Activated CD4-positive, alpha-beta memory T cell treated with anti-CD3 and anti-CD28 coated beads for 36 hours (primary cell): ENCODE measurements at regions of chr6 and their contacts with region 1.

Region 1: DNA sequence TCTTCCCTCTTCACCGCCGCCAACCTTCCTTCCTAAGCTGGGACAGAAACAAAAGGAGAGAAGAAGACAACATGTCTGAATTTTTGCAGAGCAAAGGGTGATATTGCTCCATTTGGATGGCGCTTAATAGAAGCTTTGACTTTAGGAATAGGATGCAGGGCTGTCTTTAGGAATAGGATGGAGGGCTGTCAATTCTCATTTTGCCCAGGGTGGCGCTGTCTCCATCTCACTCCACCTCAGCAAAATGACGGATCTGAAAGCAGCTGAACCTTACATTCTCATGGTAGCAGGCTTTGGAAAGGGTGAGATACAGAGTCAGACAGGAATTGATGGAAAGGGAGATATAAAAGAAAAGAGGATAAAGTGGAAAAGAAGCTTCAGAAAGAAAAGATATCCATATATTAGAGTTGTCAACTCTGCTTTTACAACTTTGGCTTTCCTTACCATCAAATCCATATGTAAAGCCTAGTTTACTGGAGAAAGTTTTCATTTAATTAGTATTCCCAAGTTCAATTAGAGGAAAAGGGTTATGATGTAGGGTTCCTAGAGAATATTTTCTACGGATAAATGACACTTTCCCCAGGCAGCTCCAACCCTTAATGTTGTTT is 2.4 kb downstream of the MTCL3 start:
- DNase-seq: peak; percentile 72
- H3K4me3 Mint-ChIP-seq: peak overlapping the region; percentile 85
- H3K27ac Mint-ChIP-seq: peak overlapping the region; percentile 34
- H3K4me1 Mint-ChIP-seq: peaks cover 32% of the 10 kb centered on the region
- H3K27me3 Mint-ChIP-seq: peaks cover 15% of the 10 kb centered on the region

Region 2: GRCh38 chr6:127134136-127134535 is 382.6 kb before region 1 on chr6:
- CTCF ChIA-PET with region 1: no interaction called
- POLR2A ChIA-PET with region 1: no interaction called
- intact Hi-C with region 1: no loop called
- DNase-seq: no peak
- H3K4me3 Mint-ChIP-seq: no peak overlapping the region
- H3K27ac Mint-ChIP-seq: no peak overlapping the region
- H3K4me1 Mint-ChIP-seq: no peaks in the 10 kb centered on the region
- H3K27me3 Mint-ChIP-seq: peaks cover 10% of the 10 kb centered on the region

Region 3: GRCh38 chr6:127266178-127266891 is 250.4 kb before region 1 on chr6 and contains the start of gene RNF146:
- CTCF ChIA-PET with region 1: interaction called, 22 read pairs
- POLR2A ChIA-PET with region 1: interaction called, 11 read pairs
- intact Hi-C with region 1: loop called (anchors 1 kb)
- DNase-seq: peak; percentile 77
- H3K4me3 Mint-ChIP-seq: peak within 1 kb of the TSS; percentile 93
- H3K27ac Mint-ChIP-seq: peak within 1 kb of the TSS; percentile 97
- H3K4me1 Mint-ChIP-seq: peaks cover 32% of the 10 kb centered on the region
- H3K27me3 Mint-ChIP-seq: peaks cover 1% of the 10 kb centered on the region
- total RNA-seq, gene RNF146: 15.4 to 20.3 TPM

Region 4: DNA sequence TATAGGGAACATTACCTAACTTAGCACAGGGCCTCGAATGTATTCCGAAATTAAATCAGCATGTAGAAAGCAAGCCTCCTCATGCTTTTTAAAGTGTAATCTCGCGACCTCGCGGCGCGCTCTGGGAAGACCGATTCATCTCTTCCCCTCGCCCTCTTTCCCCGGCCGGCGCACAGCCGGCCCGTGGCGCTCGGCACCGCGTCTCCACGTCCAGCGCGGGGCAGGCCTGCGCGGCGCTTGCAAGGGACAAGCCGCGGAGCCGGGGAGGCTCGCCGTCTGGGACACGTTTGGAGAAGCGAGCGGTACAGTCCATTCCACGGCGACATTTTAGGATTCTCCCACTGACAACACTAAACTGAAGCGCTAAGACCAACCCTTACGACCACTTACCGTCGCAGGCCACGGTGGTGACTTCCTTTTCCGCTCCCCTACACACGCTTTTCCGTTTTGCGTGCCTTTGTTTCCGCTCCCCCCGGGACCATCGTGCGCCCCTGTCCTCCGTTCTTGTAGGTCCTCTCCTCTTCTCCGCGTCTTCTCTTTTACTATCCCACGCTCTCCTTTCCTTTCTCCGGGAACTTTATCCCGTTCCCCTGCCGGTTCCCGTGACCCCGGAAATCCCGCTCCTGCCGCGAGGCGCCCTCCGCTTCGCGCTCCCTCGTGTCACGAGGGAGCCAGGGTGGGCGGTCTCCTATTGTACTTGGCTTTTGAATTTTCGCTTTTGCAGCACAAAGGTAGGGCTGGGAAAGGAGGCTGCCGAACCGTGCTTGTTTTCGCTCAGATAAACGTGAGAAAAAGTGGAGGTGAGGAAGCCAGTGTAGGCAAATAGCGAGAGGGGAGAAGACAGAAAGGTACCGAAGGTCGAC is 173.6 kb before region 1 on chr6 and contains the start of gene ECHDC1:
- CTCF ChIA-PET with region 1: interaction called, 22 read pairs
- POLR2A ChIA-PET with region 1: interaction called, 4 read pairs
- intact Hi-C with region 1: loop called (anchors 1 kb)
- DNase-seq: peak; percentile 83
- H3K4me3 Mint-ChIP-seq: no peak within 1 kb of the TSS
- H3K27ac Mint-ChIP-seq: no peak within 1 kb of the TSS
- H3K4me1 Mint-ChIP-seq: peaks cover 7% of the 10 kb centered on the region
- H3K27me3 Mint-ChIP-seq: no peaks in the 10 kb centered on the region
- total RNA-seq, gene ECHDC1: 42.9 to 43.7 TPM

Region 5: DNA sequence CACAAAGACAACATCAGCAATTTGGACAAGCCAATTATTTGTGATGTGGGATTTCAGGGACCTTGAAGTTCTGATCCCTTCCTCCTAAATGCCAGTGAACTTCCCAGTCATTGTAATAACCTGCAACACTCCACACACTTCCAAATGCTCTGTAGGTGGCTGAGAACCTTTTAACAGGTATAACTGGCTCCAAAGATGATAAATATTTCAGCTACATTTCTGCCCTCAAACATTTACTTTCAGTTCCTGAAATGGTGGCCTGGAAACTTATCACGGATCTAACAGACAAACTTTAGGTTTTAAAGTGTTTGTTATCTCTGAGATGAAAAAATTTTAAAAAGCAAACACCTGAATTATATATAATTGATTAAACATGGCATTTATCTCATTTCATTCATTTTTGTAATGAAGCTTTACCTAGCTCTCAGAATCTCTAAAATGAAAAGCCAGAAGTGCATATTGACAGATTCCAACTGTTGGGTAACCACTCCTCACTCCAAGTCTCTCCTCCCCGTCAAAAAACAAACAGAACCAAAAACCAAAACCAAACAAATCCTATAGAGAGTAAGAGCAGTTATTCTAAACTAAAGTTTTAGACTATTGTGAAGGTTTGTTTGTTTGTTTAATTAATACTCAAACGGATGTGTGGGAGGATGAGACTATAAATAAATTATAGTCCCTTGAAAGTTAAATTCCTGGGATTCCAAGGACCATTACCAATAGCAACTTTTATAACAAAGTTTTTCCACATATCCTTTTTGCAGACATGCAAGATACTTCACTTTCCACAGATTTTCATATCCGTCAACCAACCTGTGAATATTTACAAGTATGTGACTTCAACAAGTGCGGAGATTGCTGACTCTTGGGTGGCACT is 45.2 kb before region 1 on chr6:
- CTCF ChIA-PET with region 1: interaction called, 30 read pairs
- POLR2A ChIA-PET with region 1: interaction called, 4 read pairs
- intact Hi-C with region 1: no loop called
- DNase-seq: no peak
- H3K4me3 Mint-ChIP-seq: no peak overlapping the region
- H3K27ac Mint-ChIP-seq: no peak overlapping the region
- H3K4me1 Mint-ChIP-seq: no peaks in the 10 kb centered on the region
- H3K27me3 Mint-ChIP-seq: no peaks in the 10 kb centered on the region

Region 6: DNA sequence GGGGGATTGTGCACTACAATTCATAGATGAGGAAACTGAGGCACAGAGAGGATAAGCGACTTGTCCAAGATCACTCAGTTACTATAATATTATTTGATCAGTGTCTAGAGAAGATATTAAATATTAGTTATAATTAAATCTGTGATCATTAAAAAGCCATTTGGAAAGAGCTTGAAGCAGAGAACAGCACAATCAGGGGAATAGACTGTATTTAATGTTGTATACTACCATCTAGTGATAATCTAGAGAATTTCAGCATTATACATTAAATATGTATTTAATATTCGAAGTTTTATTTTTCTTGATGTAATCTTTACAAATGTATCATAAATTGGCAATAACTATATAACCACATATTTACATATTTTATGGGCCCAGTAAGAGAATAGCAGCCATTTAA is 22.5 kb after region 1 on chr6:
- CTCF ChIA-PET with region 1: interaction called, 97 read pairs
- POLR2A ChIA-PET with region 1: no interaction called
- intact Hi-C with region 1: no loop called
- DNase-seq: no peak
- H3K4me3 Mint-ChIP-seq: no peak overlapping the region
- H3K27ac Mint-ChIP-seq: no peak overlapping the region
- H3K4me1 Mint-ChIP-seq: peaks cover 3% of the 10 kb centered on the region
- H3K27me3 Mint-ChIP-seq: peaks cover 13% of the 10 kb centered on the region

Region 7: DNA sequence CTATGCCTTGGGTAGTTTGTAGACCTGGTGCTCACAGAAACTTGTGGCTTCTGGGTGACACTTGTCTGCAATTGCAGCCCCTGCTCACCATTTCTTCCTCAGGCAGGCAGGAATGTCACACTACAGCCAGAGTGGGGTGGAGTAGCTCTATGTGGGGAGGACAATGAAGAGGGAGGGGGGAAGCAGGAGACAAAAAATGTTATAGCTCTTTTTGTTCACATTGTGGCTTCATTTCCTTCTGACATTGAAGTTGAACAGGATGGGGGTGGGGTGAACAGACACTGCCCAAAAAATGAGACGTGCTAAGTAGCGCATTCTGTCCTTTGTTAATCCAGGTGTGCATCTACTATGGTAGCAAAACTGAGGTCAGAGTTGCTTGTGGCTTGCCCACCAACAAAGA is 384.2 kb after region 1 on chr6 and contains the start of gene THEMIS:
- CTCF ChIA-PET with region 1: no interaction called
- POLR2A ChIA-PET with region 1: no interaction called
- intact Hi-C with region 1: no loop called
- DNase-seq: peak; percentile 50
- H3K4me3 Mint-ChIP-seq: peak within 1 kb of the TSS; percentile 89
- H3K27ac Mint-ChIP-seq: peak within 1 kb of the TSS; percentile 93
- H3K4me1 Mint-ChIP-seq: peaks cover 64% of the 10 kb centered on the region
- H3K27me3 Mint-ChIP-seq: no peaks in the 10 kb centered on the region
- total RNA-seq, gene THEMIS: 9.5 to 11.5 TPM

Region 8: GRCh38 chr6:129490521-129491245 is 1973.9 kb after region 1 on chr6:
- CTCF ChIA-PET with region 1: no interaction called
- POLR2A ChIA-PET with region 1: no interaction called
- intact Hi-C with region 1: loop called (anchors 5 kb)
- DNase-seq: peak; percentile 78
- H3K4me3 Mint-ChIP-seq: peak overlapping the region; percentile 61
- H3K27ac Mint-ChIP-seq: peak overlapping the region; percentile 98
- H3K4me1 Mint-ChIP-seq: peaks cover 61% of the 10 kb centered on the region
- H3K27me3 Mint-ChIP-seq: no peaks in the 10 kb centered on the region